ENCODE measurements at regions of chr1 and their contacts with region 1.

Region 1: DNA sequence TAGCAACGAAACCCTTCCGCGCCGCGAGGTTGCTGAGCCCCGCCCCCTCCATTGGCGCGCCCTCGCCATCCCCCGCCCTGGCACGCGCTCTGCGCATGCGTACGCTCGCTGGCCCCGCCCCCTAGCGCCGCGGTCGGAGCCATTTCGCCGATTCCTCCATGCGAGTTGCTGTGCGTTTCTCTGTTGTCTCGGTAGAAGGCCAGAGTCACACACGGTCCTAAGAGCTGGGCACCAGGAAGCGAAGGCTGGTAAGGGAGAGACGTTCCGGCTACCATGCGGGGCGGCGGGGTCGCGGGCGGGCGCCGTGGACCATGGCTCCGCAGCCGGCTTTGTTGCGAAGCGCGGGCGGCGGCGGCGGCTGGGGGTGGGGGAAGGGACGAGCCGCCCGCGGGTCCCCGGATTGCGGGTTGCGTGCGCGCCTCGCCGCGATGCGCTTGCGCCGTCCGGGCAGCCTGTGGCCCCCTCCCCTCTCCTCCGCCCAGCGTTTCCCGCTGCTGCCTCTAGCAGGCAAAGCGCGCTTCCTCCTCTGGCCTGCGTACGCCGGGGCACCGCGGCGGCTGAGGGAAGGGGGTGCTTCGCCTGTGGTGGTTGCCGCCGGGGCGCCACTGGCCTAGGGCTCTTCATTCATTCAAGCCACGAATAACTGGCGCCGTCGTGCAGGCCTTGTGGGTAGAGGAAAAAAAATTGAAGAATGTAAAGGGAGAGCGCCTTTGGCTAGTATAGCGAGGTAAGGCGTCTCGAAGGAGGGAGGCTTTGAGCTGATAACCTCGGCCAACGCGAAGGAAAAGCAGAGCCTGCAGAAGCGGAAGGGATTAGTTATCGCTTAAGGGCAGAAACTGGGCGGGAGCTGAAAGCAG is at the start of gene DHX9:
- DNase-seq: peak; percentile 89
- H3K4me3 ChIP-seq: peak within 1 kb of the TSS; percentile 79 to 84
- H3K27ac ChIP-seq: peak within 1 kb of the TSS; percentile 94 to 96
- H3K4me1 ChIP-seq: no peaks in the 10 kb centered on the region
- H3K27me3 ChIP-seq: no peaks in the 10 kb centered on the region
- CTCF ChIP-seq: peak in 2 of 4 experiments; percentile 15 to 22
- POLR2A ChIP-seq: peak; percentile 79
- total RNA-seq, gene DHX9: 97.4 to 103 TPM

Region 2: GRCh38 chr1:182789138-182790076 is 50.0 kb before region 1 on chr1 and contains the start of gene NPL:
- intact Hi-C with region 1: loop called (anchors 5 kb)
- DNase-seq: peak; percentile 77
- H3K4me3 ChIP-seq: peak within 1 kb of the TSS; percentile 50
- H3K27ac ChIP-seq: peak within 1 kb of the TSS; percentile 10 to 63
- H3K4me1 ChIP-seq: no peaks in the 10 kb centered on the region
- H3K27me3 ChIP-seq: no peaks in the 10 kb centered on the region
- CTCF ChIP-seq: peak in 1 of 4 experiments; percentile 18
- POLR2A ChIP-seq: peak; percentile 89
- total RNA-seq, gene NPL: 2.2 to 6.8 TPM

Measured in prostate gland (tissue), 2 donors.